ENCODE measurements at regions of chr9 and their contacts with region 1.

Region 1: DNA sequence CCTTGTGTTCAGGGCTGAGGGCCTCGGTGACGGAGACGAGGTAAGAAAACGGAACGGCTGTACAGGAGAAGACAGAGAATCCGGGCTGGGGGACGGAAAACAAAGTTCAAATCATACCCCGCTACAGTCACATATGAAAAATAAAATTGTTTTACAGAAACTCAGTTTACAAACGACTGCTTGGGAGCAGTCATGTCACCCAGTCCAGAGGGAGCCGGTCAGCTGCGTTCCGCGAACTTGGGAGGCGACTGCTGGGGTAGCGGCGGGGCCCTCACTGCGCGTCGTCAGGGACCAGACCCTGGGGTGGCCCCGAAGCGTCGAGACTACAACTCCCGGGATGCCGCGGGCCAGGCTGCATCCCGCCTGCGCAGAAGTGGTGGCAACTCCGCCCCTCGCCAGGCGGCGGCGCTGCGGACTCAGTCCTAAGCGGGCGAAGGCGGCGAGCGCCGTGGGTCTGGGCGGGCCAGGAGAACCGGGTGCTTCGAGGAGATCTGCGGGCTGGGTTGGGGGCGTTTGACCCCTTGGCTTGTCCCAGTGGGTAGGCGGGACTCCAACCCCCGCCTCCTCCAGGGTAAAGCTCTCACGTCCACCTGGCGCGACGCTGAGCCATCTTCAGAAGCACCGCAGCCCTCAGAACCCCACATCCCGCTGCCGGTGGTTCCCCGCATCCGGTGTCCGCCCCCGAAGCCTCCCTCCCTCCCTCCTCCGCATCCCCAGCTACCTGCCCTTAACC is 4.0 kb downstream of the SIT1 start:
- DNase-seq: peak; percentile 94
- ATAC-seq: peak; percentile 88
- H3K4me3 Mint-ChIP-seq: peak overlapping the region; percentile 97
- H3K27ac Mint-ChIP-seq: peak overlapping the region; percentile 98
- H3K4me1 Mint-ChIP-seq: peaks cover 90% of the 10 kb centered on the region
- H3K27me3 Mint-ChIP-seq: no peaks in the 10 kb centered on the region
- CTCF ChIP-seq: peak; percentile 65

Region 2: GRCh38 chr9:34974664-34975063 is 672.0 kb before region 1 on chr9:
- CTCF ChIA-PET with region 1: no interaction called
- POLR2A ChIA-PET with region 1: no interaction called
- intact Hi-C with region 1: no loop called
- DNase-seq: no peak
- ATAC-seq: no peak
- H3K4me3 Mint-ChIP-seq: no peak overlapping the region
- H3K27ac Mint-ChIP-seq: no peak overlapping the region
- H3K4me1 Mint-ChIP-seq: no peaks in the 10 kb centered on the region
- H3K27me3 Mint-ChIP-seq: peaks cover 15% of the 10 kb centered on the region
- CTCF ChIP-seq: no peak

Region 3: DNA sequence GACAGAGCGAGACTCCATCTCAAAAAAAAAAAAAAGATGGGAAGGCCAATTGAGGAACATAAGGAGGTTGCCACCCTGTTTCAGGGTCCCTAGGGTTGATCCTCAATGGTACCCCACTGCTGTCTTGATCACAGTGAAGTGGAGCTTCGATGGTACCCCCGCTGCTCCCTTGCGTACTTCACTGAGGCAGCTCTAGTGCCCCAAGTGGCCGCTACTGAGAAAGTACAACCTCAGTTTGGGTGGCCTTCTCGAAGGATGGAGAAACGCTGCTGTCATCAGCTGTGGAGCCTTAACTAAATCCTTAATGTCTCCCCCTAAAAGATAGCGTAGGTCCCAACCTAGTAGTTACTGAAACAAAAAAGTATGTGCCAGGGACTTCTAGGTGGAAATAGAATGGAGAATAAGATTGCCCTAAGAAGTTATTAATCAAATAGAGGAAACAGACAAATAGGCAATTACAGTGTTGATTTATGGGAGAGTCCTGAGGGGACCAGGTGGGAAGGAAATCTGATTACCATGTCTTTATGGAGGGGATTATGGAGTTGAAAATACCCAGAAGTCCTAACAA is 35.4 kb before region 1 on chr9:
- CTCF ChIA-PET with region 1: interaction called, 162 read pairs
- POLR2A ChIA-PET with region 1: interaction called, 549 read pairs
- intact Hi-C with region 1: no loop called
- DNase-seq: no peak
- ATAC-seq: peak; percentile 94
- H3K4me3 Mint-ChIP-seq: no peak overlapping the region
- H3K27ac Mint-ChIP-seq: peak overlapping the region; percentile 54
- H3K4me1 Mint-ChIP-seq: peaks cover 66% of the 10 kb centered on the region
- H3K27me3 Mint-ChIP-seq: no peaks in the 10 kb centered on the region
- CTCF ChIP-seq: no peak

Region 4: GRCh38 chr9:35636135-35636876 is 10.4 kb before region 1 on chr9:
- CTCF ChIA-PET with region 1: interaction called, 7 read pairs
- POLR2A ChIA-PET with region 1: interaction called, 33 read pairs
- intact Hi-C with region 1: loop called (anchors 1 kb)
- DNase-seq: no peak
- ATAC-seq: peak; percentile 64
- H3K4me3 Mint-ChIP-seq: peak overlapping the region; percentile 71
- H3K27ac Mint-ChIP-seq: peak overlapping the region; percentile 94
- H3K4me1 Mint-ChIP-seq: peaks cover 80% of the 10 kb centered on the region
- H3K27me3 Mint-ChIP-seq: no peaks in the 10 kb centered on the region
- CTCF ChIP-seq: no peak

Region 5: DNA sequence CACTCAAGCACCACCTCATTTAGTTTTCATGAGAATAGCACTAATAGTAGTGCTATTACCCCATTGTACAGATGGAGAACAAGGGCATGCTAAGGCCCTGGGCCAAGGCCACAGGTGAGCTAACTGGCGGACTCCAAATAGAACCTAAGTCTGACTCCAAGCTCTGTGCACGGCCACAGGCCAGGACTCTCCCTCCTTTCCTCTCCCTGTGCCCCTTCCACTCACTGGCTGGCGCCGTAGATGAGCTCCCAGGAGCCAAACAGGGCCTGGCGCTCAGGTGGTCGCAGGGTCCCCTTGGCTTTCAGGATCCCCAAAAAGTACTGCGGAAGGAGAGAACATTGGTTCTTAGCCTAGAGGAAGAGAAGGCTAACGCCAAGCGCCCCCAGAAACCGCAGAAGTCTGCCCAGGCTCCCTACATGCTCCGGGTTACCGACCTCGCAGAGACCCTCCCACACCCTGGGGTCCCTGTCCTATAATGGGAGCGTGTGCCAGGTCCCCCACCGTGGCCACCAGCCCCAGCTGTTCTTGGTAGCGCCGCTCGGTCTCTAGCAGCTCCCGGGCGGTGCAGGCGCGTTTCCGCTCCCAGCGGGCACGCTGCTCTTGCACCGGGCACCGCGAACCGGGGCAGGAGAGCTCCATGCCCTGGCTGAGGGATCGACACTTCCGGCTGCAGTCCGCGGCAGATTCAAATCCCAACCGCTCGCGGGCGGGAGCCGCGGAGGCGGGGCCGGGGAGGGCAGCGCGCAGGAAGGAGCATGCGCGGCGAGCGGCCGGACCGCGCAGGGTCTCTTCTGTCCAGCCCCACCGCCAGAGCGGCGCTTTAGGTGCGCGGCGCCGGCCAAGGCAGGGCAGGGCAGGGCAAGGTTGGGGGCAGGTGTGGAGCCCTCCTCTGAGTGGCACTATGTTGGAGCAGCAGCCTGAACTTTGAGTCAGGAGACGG is 18.1 kb after region 1 on chr9 and contains the start of gene ARHGEF39:
- CTCF ChIA-PET with region 1: no interaction called
- POLR2A ChIA-PET with region 1: interaction called, 10 read pairs
- intact Hi-C with region 1: no loop called
- DNase-seq: peak; percentile 60
- ATAC-seq: peak; percentile 71
- H3K4me3 Mint-ChIP-seq: peak within 1 kb of the TSS; percentile 83
- H3K27ac Mint-ChIP-seq: peak within 1 kb of the TSS; percentile 25
- H3K4me1 Mint-ChIP-seq: peaks cover 54% of the 10 kb centered on the region
- H3K27me3 Mint-ChIP-seq: no peaks in the 10 kb centered on the region
- CTCF ChIP-seq: no peak
- total RNA-seq, gene ARHGEF39: 0.59 and 0.89 TPM in 2 replicates

Region 6: GRCh38 chr9:35716230-35716629 is 69.5 kb after region 1 on chr9:
- CTCF ChIA-PET with region 1: no interaction called
- POLR2A ChIA-PET with region 1: interaction called, 6 read pairs
- intact Hi-C with region 1: loop called (anchors 1 kb)
- DNase-seq: no peak
- ATAC-seq: no peak
- H3K4me3 Mint-ChIP-seq: no peak overlapping the region
- H3K27ac Mint-ChIP-seq: no peak overlapping the region
- H3K4me1 Mint-ChIP-seq: peaks cover 26% of the 10 kb centered on the region
- H3K27me3 Mint-ChIP-seq: no peaks in the 10 kb centered on the region
- CTCF ChIP-seq: no peak

Region 7: DNA sequence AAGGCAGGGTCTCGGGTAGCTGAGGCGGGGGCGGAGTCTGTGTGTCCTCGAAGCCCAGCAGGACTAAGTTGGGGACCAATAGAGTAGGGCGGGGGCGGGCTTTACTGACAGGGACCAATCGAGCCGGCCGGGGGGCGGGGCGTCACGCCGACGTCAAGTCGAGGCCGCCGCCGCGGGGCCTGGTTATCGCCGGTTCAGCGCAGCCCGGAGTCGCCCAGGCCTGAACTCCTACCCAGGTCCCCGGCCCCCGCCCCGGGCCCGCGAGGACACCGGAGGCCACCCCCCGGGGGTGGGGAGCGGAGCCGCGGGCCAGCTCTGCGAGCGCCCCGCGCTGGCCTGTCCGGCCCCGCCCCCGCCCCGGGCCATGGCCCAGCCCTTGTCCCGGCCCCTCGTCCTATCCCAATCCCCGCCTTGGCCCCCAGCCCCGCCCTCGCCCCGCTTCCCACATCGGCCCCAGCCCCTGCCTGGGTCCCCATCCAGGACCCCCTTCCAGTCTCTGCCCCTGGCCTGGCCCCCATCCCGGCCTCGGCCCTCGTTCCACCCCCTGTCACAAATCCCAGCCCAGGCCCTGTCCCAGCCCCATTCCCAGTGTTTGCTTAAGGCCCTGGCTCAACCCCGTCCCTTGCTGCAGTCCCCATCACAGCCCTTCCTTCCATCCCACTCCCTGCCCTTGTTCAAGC is 182.5 kb after region 1 on chr9 and contains the start of gene TMEM8B:
- CTCF ChIA-PET with region 1: interaction called, 7 read pairs
- POLR2A ChIA-PET with region 1: no interaction called
- intact Hi-C with region 1: loop called (anchors 2 kb)
- DNase-seq: peak; percentile 89
- ATAC-seq: peak; percentile 92
- H3K4me3 Mint-ChIP-seq: peak within 1 kb of the TSS; percentile 95
- H3K27ac Mint-ChIP-seq: peak within 1 kb of the TSS; percentile 86
- H3K4me1 Mint-ChIP-seq: peaks cover 34% of the 10 kb centered on the region
- H3K27me3 Mint-ChIP-seq: no peaks in the 10 kb centered on the region
- CTCF ChIP-seq: no peak
- total RNA-seq, gene TMEM8B: 5.0 and 8.0 TPM in 2 replicates

Region 8: DNA sequence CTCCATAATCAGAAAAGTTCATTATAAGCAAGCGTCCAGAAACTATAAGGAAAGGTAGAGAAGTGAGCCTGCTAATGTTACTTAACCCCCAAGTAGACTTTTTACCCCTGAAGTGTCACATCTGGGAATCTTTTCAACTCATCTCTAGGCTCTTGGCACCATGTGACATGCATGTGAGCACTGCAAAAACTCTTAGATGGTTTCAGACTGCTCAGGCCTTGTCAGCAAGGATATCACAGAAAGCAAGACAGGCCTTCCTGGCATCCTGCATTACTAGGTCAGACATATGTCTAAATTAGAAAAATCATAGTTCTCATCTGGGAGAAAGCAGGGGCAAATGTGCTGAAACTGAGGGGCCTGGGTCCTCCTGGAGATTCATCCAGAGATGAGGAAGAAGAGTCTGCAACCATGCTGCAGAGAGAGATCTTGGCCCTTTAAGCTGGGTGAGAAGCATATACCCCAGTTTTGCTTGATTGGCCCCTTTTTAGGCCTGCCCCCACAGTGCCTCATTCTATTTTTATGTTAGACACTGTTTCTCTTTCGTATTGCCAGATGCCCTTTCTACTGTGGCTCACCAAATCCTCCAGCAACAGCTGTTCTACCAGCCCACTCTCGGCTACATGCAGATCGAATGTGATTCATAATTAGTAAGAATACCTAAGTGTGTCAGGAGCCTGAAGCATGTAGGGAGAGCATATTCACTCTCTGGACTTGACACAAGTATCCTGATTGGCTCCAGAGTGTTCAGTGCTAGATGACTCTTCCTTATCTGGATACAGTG is 201.3 kb after region 1 on chr9:
- CTCF ChIA-PET with region 1: no interaction called
- POLR2A ChIA-PET with region 1: no interaction called
- intact Hi-C with region 1: no loop called
- DNase-seq: no peak
- ATAC-seq: peak; percentile 68
- H3K4me3 Mint-ChIP-seq: peak overlapping the region; percentile 50
- H3K27ac Mint-ChIP-seq: peak overlapping the region; percentile 61
- H3K4me1 Mint-ChIP-seq: peaks cover 58% of the 10 kb centered on the region
- H3K27me3 Mint-ChIP-seq: no peaks in the 10 kb centered on the region
- CTCF ChIP-seq: no peak